Heart right ventricle (tissue), 16 donors: ENCODE measurements at regions of chr10 and their contacts with region 1.

Region 1: DNA sequence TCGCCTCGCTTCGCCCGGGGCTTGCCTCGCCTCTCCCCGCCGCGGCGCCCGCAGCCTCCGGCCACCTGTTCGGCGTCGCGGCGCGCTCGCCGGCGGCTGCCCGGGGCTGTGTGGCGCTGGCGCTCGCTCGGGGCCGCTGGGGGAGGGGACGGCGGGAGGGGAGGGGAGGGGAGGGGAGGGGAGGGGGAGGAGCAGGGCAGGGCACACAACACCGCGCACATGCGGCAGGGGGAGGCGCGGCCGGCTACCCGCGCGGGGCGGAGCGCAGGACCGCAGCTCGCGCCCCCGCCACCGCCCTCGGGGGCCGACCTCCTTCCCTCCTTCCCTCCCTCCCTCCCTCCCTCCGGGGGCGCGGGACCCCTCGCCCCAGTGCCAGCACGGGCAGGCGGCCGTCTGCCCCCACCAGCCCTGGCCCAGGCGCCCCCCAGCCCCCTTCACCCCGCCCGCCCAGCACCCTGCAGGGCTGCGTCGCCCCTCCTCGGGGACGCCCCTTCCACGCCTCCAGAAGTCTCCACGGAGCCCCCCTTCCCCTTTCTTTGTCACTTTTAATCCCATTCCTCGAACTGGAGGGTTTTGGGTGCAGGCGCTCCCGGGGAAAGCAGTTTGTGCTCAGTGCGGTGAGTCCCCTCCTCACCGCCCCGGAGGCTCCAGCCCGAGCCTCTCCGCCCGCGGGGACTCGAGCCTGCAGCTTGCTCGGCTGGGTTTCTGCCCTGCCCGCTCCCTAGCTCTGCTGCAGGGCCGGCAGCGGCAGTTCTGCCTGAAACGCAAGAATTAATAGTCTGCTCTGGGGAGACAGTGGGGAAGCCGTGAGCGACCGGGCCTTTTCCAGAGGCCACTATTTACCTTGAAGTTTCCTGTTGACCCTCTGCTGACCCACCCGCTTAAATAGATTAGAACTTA is at the start of gene PARD3:
- DNase-seq: peak; percentile 58 to 77
- ATAC-seq: peak; percentile 68 to 87 (median 78)
- H3K4me3 ChIP-seq: peak within 1 kb of the TSS; percentile 56 to 97 (median 80)
- H3K27ac ChIP-seq: peak within 1 kb of the TSS; percentile 68 to 91 (median 85)
- H3K4me1 ChIP-seq: peaks cover 2 to 46% (median 36%) of the 10 kb centered on the region in 9 donors
- H3K27me3 ChIP-seq: peaks cover 0 to 56% (median 3%) of the 10 kb centered on the region in 7 donors
- CTCF ChIP-seq: no peak
- total RNA-seq, gene PARD3: 28.8 to 41.8 (median 34.2) TPM

Region 2: DNA sequence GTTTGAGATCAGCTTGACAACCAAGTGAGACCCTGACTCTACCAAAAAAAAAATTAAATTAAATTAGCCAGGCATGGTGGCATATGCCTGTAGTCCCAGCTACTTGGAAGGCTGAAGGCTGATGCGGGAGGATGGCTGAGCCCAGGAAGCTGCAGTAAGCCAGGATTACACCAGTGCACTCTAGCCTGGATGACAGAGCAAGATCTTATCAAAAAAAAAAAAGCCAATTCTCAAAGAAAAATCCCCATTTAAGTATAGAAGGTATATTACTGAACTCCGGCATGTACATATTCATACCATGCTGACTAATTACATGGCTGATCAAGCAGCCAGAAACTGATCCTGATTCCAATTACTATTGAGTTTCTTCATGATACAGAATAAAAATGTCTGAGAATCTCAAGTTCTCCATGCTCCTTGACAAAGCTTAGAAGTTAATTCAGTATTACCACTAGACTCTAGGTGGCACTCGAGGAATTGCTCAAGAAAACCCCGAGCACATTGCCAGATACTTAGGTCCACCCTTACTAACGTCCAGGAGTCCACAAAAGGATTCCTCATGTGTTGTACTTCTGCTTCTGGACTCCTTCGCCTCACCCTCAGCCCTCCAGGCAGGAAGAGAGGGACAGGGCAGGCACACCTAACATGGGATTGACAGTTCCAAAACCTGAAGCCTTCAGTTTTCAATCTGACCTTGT is 149.3 kb before region 1 on chr10:
- intact Hi-C with region 1: loop called in 7 of 10 experiments (anchors 5 to 10 kb)
- DNase-seq: peak in 1 of 2 donors; percentile 55
- ATAC-seq: peak in 7 of 8 donors; percentile 62 to 87 (median 80)
- H3K4me3 ChIP-seq: no peak overlapping the region
- H3K27ac ChIP-seq: no peak overlapping the region
- H3K4me1 ChIP-seq: peaks cover 0 to 27% (median 12%) of the 10 kb centered on the region in 9 donors
- H3K27me3 ChIP-seq: no peaks in the 10 kb centered on the region
- CTCF ChIP-seq: peak; percentile 25 to 71 (median 55)

Region 3: DNA sequence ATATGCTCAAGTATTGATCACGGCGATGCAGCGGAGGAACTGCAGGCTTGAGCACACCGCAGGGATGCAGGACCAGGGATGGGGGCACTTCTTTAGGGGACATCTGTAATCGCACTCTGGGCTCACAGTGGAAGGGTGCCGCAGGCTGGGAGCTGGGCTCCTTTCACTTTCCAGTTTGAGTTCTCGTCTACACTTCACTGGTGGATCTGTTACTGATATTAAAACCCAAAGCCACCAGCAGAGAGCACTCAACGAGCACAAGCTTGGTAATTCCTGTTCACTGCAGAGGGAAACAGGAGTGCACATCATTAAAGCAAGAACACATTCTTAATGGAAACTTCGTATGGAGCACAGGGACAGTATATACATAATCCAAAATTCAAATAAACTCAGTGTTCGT is 91.7 kb before region 1 on chr10:
- intact Hi-C with region 1: loop called (anchors 2 to 10 kb)
- DNase-seq: peak in 1 of 2 donors; percentile 67
- ATAC-seq: peak in 7 of 8 donors; percentile 70 to 87 (median 78)
- H3K4me3 ChIP-seq: peak overlapping the region in 1 of 10 donors; percentile 8
- H3K27ac ChIP-seq: peak overlapping the region in 1 of 10 donors; percentile 25
- H3K4me1 ChIP-seq: peaks cover 0 to 66% (median 37%) of the 10 kb centered on the region in 9 donors
- H3K27me3 ChIP-seq: no peaks in the 10 kb centered on the region
- CTCF ChIP-seq: peak; percentile 29 to 75 (median 56)

Region 4: GRCh38 chr10:34768261-34768971 is 47.0 kb before region 1 on chr10:
- intact Hi-C with region 1: loop called in 1 of 10 experiments (anchors 5 kb)
- DNase-seq: peak; percentile 71 to 79
- ATAC-seq: peak; percentile 89 to 98 (median 95)
- H3K4me3 ChIP-seq: peak overlapping the region in 1 of 10 donors; percentile 3
- H3K27ac ChIP-seq: peak overlapping the region in 1 of 10 donors; percentile 40
- H3K4me1 ChIP-seq: peaks cover 0 to 58% (median 36%) of the 10 kb centered on the region in 9 donors
- H3K27me3 ChIP-seq: no peaks in the 10 kb centered on the region
- CTCF ChIP-seq: no peak

Region 5: DNA sequence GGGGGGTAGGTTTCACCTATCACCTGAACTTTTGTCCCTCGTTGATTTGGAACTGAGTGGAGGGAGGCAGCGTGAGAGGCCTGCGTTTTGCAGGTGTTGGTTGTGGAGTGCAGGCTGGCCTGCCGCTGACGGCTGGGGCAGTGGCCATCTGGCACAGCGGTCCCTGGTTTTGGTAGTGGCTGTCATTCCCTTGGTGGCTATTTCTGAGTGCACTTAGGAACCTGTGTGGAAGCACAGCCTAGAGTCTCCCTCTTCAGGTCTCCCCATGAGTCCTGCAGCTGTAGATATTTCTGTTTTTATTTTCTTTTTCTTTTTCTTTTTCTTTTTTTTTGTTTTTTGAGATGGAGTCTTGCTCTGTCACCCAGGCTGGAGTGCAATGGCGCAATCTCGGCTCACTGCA is 145.5 kb after region 1 on chr10:
- intact Hi-C with region 1: loop called in 1 of 10 experiments (anchors 10 kb)
- DNase-seq: peak; percentile 22 to 48
- ATAC-seq: peak; percentile 78 to 95 (median 90)
- H3K4me3 ChIP-seq: no peak overlapping the region
- H3K27ac ChIP-seq: no peak overlapping the region
- H3K4me1 ChIP-seq: no peaks in the 10 kb centered on the region
- H3K27me3 ChIP-seq: no peaks in the 10 kb centered on the region
- CTCF ChIP-seq: peak in 8 of 9 donors; percentile 12 to 59 (median 45)

Region 6: GRCh38 chr10:35079763-35080162 is 264.3 kb after region 1 on chr10:
- intact Hi-C with region 1: no loop called
- DNase-seq: no peak
- ATAC-seq: no peak
- H3K4me3 ChIP-seq: no peak overlapping the region
- H3K27ac ChIP-seq: no peak overlapping the region
- H3K4me1 ChIP-seq: no peaks in the 10 kb centered on the region
- H3K27me3 ChIP-seq: no peaks in the 10 kb centered on the region
- CTCF ChIP-seq: no peak